ENCODE measurements at regions of chr19 and their contacts with region 1.

Region 1: DNA sequence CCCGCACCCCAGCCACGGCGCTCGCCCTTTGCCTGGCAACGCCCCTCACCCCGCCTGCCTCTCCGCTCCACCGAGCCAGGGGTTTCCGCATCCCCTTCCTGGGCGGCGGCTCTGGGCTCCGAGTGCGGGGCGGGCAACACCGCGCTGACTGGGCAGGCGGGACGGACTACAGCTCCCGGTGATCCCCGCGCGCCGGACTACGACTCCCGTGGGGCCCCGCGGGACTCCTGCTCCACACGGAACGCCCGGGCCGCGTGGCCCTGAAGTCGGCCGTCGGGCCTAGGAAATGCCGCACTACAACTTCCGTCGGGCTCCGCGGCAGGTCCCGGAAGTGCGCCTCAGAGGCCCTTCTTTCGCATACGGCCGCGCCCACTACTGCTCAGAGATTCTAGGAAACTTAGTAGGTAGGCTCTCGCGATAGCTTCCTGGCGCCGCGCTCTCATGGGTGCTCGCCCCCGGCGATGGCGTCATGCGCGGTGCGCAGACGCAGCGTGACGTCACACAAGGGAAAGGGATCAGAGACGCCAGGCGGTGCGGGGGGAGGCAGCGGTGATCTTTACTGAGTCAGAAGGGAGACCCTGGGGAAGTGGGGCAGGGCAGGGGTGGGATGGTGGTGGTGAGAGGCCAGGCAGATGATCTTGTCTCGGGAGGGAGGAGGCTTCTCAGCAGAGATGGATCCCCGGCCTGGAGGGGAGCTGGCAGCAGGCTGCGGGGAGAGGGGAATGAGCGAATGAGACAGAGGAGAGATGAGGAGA is at the start of gene JOSD2:
- DNase-seq: peak; percentile 99
- H3K4me3 Mint-ChIP-seq: peak within 1 kb of the TSS; percentile 87
- H3K27ac Mint-ChIP-seq: peak within 1 kb of the TSS; percentile 94
- H3K4me1 Mint-ChIP-seq: peaks cover 23% of the 10 kb centered on the region
- H3K27me3 Mint-ChIP-seq: peaks cover 22% of the 10 kb centered on the region
- total RNA-seq, gene JOSD2: 17.2 to 17.9 TPM

Region 2: DNA sequence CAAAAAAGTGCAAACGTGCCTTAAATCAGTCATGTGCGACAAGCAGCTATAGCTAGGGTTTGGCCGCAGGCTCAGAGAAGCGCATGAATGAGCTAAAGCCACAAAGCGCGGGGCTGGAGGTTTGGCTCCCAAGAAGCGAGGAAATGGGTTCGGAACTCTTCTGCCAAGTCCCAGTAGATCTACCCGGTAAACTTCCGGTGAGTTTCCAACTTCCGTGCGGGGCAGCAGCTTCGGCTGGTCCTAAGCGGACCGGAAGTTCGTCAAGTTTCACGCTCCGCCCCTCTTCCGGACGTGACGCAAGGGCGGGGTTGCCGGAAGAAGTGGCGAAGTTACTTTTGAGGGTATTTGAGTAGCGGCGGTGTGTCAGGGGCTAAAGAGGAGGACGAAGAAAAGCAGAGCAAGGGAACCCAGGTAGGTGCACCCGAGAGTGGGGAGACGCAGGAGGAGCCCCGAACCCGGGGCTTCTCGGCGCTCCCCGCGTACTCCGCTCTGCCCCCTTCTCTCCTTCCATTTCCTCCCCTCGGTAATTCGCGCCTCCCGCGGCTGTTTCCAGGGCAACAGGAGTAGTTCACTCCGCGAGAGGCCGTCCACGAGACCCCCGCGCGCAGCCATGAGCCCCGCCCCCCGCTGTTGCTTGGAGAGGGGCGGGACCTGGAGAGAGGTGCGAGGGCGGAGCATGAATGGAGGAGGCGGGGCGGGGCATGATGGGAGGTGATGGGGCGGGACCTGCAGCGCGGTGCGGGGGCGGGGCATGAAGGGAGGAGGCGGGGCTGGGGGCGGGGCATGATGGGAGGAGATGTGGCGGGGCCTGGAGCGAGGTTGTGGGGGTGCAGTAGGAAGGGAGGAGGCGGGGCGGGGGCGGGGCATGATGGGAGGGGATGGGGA is 134.8 kb before region 1 on chr19 and contains the start of gene NR1H2:
- CTCF ChIA-PET with region 1: no interaction called
- intact Hi-C with region 1: loop called (anchors 1 kb)
- DNase-seq: peak; percentile 96
- H3K4me3 Mint-ChIP-seq: peak within 1 kb of the TSS; percentile 100
- H3K27ac Mint-ChIP-seq: peak within 1 kb of the TSS; percentile 100
- H3K4me1 Mint-ChIP-seq: peaks cover 19% of the 10 kb centered on the region
- H3K27me3 Mint-ChIP-seq: no peaks in the 10 kb centered on the region
- total RNA-seq, gene NR1H2: 47.2 to 49.3 TPM

Region 3: GRCh38 chr19:50476224-50476942 is 34.9 kb before region 1 on chr19 and contains the starts of genes EMC10 and GARIN5A:
- CTCF ChIA-PET with region 1: no interaction called
- intact Hi-C with region 1: loop called (anchors 1 kb)
- DNase-seq: peak; percentile 97
- H3K4me3 Mint-ChIP-seq: peak within 1 kb of the TSS; percentile 99
- H3K27ac Mint-ChIP-seq: peak within 1 kb of the TSS; percentile 86
- H3K4me1 Mint-ChIP-seq: peaks cover 28% of the 10 kb centered on the region
- H3K27me3 Mint-ChIP-seq: no peaks in the 10 kb centered on the region
- total RNA-seq, gene EMC10: 28.4 to 29.2 TPM
- total RNA-seq, gene GARIN5A: 0.57 TPM in 1 of 2 experiments, not detected in the other

Region 4: DNA sequence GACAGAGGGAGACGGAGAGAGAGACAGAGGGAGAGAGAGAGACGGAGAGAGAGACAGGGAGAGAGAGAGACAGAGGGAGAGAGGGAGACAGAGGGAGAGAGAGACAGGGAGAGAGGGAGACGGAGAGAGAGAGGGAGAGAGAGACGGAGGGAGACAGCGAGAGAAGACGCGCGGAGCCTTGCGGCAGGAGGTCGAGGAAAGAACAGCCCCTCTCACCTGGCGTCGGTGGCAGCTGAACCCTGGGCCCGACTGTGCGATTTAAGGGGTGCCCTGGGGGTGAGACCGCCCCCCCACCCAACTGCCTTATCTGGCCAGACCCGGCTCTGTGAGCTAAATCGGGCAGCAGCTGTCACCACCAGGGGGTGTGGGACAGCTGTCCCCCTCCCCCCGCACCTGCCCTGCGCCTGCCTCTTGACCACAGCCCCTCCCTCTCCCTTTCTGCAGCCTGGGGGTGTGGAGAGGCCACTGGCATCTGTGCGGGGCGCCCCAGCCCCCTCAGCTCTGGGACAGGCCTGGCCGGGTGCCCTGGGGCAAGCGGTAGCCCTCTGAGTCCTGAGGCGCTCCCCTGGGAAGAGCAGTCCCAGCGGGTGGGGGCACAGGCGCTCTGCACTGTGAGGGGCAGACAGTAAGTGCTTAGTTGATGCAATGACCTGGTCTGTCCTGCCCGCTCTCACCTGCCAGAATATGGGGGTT is 11.0 kb before region 1 on chr19:
- CTCF ChIA-PET with region 1: no interaction called
- intact Hi-C with region 1: no loop called
- DNase-seq: peak; percentile 22
- H3K4me3 Mint-ChIP-seq: no peak overlapping the region
- H3K27ac Mint-ChIP-seq: no peak overlapping the region
- H3K4me1 Mint-ChIP-seq: no peaks in the 10 kb centered on the region
- H3K27me3 Mint-ChIP-seq: no peaks in the 10 kb centered on the region

Region 5: GRCh38 chr19:50804420-50805272 is 293.4 kb after region 1 on chr19:
- CTCF ChIA-PET with region 1: no interaction called
- intact Hi-C with region 1: loop called (anchors 1 kb)
- DNase-seq: peak; percentile 99
- H3K4me3 Mint-ChIP-seq: peak overlapping the region; percentile 98
- H3K27ac Mint-ChIP-seq: peak overlapping the region; percentile 100
- H3K4me1 Mint-ChIP-seq: peaks cover 28% of the 10 kb centered on the region
- H3K27me3 Mint-ChIP-seq: no peaks in the 10 kb centered on the region

Region 6: DNA sequence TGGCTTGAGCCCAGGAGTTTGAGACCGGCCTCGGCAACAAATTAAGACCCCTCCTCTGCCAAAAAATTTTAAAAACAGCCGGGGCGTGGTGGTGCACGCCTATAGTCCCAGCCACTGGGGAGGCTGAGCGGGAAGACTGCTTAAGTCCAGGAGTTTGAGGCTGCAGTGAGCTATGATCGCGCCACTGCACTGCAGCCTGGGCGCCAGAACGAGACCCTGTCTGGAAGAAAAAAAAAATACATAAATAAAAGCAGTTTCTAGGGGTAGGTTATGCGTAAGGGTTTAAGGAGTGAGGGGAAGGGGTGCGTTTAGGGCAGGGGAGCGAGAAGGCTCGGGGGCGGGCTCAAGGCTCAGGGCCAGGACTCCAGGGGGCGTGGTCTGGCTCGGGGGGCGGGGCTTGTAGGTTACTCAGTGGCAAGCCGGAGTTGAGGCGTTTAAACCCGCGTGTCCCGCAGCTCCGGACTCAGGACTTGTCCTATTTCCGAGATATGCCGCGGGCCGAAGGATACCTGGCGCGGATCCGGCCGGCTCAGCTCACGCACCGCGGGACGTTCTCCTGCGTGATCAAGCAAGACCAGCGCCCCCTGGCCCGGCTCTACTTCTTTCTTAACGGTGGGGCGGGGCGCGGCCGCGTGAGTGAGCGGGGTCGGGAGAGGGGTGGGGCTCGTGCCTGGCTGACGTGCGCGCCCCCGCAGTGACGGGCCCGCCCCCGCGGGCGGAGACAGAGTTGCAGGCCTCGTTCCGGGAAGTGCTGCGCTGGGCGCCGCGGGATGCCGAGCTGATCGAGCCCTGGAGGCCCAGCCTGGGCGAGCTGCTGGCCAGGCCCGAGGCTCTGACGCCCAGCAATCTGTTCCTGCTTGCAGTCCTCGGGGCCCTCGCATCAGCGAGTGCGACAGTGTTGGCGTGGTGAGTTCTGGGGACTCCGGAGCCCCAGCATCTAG is 1192.6 kb after region 1 on chr19:
- CTCF ChIA-PET with region 1: no interaction called
- intact Hi-C with region 1: loop called (anchors 10 kb)
- DNase-seq: peak; percentile 97
- H3K4me3 Mint-ChIP-seq: peak overlapping the region; percentile 91
- H3K27ac Mint-ChIP-seq: peak overlapping the region; percentile 92
- H3K4me1 Mint-ChIP-seq: peaks cover 27% of the 10 kb centered on the region
- H3K27me3 Mint-ChIP-seq: peaks cover 3% of the 10 kb centered on the region